HEK293T (cell line): ENCODE measurements at regions of chr19 and their contacts with region 1.

Region 1: GRCh38 chr19:28878862-28879566 is 333.9 kb downstream of the UQCRFS1 start:
- DNase-seq: peak; percentile 34

Region 2: DNA sequence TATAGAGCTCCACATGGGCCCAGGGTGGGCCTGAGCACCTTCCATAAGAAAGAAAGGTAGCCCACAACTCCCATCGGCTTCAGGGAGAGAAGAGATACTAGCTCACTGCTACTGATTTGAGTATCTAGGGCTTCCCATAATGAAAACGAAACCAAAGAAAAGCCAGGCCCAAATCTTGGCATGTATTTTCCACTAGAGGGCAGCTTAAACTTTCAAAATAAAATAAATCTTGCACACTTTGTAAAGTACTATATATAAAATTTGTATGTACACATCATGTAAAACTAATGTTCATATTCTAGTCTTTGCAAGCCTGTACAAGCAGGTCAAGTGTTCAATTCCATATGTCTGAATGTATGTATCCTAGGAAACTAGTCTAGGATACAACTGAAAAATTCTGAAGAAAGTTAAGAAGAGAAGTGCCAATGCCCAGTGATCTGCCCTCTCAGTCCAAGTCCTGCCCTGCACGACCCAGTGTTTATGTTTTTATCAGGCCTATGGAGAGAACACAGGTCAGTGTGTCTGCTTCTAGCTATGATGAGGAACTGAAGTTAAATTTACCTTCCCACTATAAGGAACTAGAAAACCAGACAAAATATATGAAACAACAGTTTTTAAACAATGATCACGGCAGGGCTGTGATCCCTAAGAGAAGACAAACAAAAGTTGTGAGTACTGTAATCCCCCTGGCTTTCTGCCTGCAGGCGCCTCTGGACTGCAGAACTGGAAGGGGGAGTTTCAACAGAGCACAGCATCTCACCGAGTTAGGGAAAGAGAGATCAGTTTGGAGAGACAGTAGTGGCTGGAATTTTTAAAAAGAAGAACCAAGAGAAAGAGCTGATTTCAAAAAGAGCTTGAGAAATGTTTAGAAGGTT is 141.8 kb before region 1 on chr19:
- CTCF ChIA-PET with region 1: interaction called, 11 read pairs
- POLR2A ChIA-PET with region 1: no interaction called
- DNase-seq: no peak

Region 3: GRCh38 chr19:28859811-28860210 is 19.2 kb before region 1 on chr19:
- CTCF ChIA-PET with region 1: no interaction called
- POLR2A ChIA-PET with region 1: no interaction called
- DNase-seq: no peak